ENCODE measurements at regions of chr15 and their contacts with region 1.

Region 1: DNA sequence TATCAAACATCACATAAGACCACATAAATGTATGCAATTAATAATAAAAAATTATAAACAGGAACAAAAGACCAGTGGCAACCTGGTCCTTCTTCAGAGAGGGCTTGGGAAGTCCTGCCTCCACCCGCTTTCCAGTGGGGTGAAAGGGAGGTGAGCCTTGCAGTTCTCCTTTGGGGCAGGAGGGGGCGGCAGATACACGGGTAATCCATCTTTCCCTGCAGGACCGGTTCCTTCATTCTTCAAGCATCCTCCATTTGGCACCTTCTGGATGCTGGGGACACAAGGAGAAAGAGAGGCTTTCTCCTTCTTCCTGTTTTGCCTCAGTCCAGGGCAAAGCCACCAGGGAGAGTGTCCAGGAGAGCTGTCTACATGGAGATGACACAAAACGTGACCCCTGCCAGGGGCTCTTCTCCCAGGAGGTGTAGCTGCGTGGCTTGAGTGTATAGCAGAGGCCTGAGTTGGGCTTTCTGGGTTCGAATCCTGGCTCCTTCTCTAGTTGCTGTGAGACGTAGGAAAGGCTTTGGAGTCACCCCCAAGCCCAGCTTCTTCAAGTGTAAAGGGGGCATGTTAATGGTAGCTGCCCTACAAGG is 23.2 kb downstream of the RPLP1 start:
- DNase-seq: peak; percentile 84
- ATAC-seq: peak; percentile 85

Region 2: DNA sequence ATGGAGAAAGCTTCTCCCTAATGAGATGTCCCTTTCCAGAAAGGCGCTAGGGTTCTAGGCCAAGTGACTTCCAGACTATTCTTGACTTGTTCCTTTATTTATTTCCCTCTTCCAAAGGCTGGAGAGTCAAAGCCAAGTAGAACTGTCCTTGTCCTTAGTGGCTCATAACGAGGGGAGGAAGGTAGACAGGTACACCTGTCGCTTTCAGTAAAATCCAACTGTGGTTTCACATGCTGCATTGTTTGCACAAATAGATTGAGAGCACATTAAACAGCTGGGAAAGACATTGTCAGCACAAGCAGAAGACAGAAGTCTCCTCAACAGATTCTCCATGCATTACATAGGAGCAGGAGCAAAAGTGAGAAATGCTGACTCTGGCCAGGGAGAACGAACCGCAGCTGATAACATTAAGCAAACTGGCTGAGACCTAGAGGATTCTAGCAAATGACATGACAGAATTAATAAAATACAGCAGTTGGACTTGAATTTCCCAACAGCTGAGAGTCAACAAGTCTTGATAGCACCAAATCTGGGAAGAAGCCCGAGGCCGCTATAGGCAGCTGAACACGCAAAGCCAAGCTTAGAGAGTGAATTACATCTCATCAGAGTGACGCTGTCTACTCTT is 394.1 kb after region 1 on chr15:
- intact Hi-C with region 1: no loop called
- DNase-seq: no peak
- ATAC-seq: no peak

Region 3: GRCh38 chr15:70488002-70488605 is 1012.2 kb after region 1 on chr15:
- intact Hi-C with region 1: loop called (anchors 5 kb)
- DNase-seq: peak; percentile 80
- ATAC-seq: peak; percentile 69